Pancreas (tissue), 10 donors: ENCODE measurements at regions of chr11 and their contacts with region 1.

Region 1: GRCh38 chr11:86671682-86672621 is at the start of gene ME3:
- DNase-seq: peak; percentile 73 to 89 (median 78)
- ATAC-seq: peak; percentile 84 to 93 (median 90)
- H3K4me3 ChIP-seq: peak within 1 kb of the TSS; percentile 48 to 88 (median 73)
- H3K27ac ChIP-seq: peak within 1 kb of the TSS; percentile 66 to 89 (median 85)
- H3K4me1 ChIP-seq: peaks cover 0 to 14% (median 6%) of the 10 kb centered on the region in 3 donors
- H3K27me3 ChIP-seq: no peaks in the 10 kb centered on the region
- CTCF ChIP-seq: no peak
- total RNA-seq, gene ME3: 6.5 to 15.4 (median 11.3) TPM

Region 2: GRCh38 chr11:86802601-86803051 is 130.7 kb after region 1 on chr11:
- intact Hi-C with region 1: loop called in 1 of 3 experiments (anchors 5 kb)
- DNase-seq: peak in 1 of 6 donors; percentile 35
- ATAC-seq: peak; percentile 36 to 65 (median 57)
- H3K4me3 ChIP-seq: no peak overlapping the region
- H3K27ac ChIP-seq: no peak overlapping the region
- H3K4me1 ChIP-seq: peaks cover 3 to 8% (median 7%) of the 10 kb centered on the region in 3 donors
- H3K27me3 ChIP-seq: no peaks in the 10 kb centered on the region
- CTCF ChIP-seq: peak; percentile 24 to 48 (median 42)

Region 3: GRCh38 chr11:87437844-87438223 is 765.9 kb after region 1 on chr11:
- intact Hi-C with region 1: no loop called
- DNase-seq: no peak
- ATAC-seq: peak in 1 of 4 donors; percentile 40
- H3K4me3 ChIP-seq: no peak overlapping the region
- H3K27ac ChIP-seq: no peak overlapping the region
- H3K4me1 ChIP-seq: no peaks in the 10 kb centered on the region
- H3K27me3 ChIP-seq: no peaks in the 10 kb centered on the region
- CTCF ChIP-seq: no peak